Dendritic cell treated with granulocyte-macrophage colony-stimulating factor and Interleukin-4, amounts not matched to agents 40 ng/mL and 50 ng/mL, for 4 days (primary cell): ENCODE measurements at regions of chr5 and their contacts with region 1.

Region 1: GRCh38 chr5:40688127-40688761 is 8.5 kb downstream of the PTGER4 start:
- H3K4me3 Mint-ChIP-seq: peak overlapping the region; percentile 48
- H3K27ac Mint-ChIP-seq: peak overlapping the region; percentile 41
- H3K4me1 Mint-ChIP-seq: peaks cover 47% of the 10 kb centered on the region
- H3K27me3 Mint-ChIP-seq: no peaks in the 10 kb centered on the region

Region 2: GRCh38 chr5:39461026-39461682 is 1227.1 kb before region 1 on chr5:
- intact Hi-C with region 1: no loop called
- H3K4me3 Mint-ChIP-seq: no peak overlapping the region
- H3K27ac Mint-ChIP-seq: peak overlapping the region; percentile 89
- H3K4me1 Mint-ChIP-seq: peaks cover 76% of the 10 kb centered on the region
- H3K27me3 Mint-ChIP-seq: peaks cover 1% of the 10 kb centered on the region

Region 3: DNA sequence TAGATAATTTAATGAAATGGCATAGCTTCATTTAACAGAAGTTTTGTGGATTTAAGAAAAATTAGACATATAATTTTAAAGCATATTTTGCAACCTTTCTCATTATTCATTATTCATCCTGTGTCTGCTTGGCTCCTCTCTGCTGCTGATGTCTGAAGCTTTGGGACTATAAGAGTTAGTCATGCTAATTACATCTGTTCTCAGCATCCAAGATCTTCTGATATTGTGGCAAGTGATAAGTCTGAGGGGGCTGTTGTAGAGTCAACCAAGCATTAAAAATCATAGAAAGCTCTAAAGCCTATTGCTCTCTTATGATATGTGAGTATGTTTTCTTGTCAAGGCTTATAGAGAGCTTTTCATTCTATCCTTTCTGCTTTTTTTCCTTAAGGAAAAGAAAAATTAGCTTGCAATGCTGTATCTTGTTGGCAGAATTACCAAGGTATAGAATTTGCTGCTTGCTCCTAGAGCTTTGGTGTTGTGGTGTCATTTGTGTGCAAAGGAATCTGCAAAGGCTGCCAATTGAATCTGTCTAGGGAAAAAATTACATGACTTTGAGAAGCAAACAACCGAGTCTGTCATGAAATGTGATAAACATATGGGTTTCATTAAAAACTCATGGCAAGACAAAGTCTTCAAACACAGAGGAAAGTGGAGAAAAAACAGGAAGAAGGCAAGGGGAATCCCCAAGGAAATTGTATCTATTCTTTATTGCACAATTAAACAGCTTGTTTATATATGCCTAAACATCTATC is 1107.4 kb before region 1 on chr5:
- intact Hi-C with region 1: loop called (anchors 2 kb)
- H3K4me3 Mint-ChIP-seq: no peak overlapping the region
- H3K27ac Mint-ChIP-seq: no peak overlapping the region
- H3K4me1 Mint-ChIP-seq: peaks cover 25% of the 10 kb centered on the region
- H3K27me3 Mint-ChIP-seq: peaks cover 8% of the 10 kb centered on the region

Region 4: DNA sequence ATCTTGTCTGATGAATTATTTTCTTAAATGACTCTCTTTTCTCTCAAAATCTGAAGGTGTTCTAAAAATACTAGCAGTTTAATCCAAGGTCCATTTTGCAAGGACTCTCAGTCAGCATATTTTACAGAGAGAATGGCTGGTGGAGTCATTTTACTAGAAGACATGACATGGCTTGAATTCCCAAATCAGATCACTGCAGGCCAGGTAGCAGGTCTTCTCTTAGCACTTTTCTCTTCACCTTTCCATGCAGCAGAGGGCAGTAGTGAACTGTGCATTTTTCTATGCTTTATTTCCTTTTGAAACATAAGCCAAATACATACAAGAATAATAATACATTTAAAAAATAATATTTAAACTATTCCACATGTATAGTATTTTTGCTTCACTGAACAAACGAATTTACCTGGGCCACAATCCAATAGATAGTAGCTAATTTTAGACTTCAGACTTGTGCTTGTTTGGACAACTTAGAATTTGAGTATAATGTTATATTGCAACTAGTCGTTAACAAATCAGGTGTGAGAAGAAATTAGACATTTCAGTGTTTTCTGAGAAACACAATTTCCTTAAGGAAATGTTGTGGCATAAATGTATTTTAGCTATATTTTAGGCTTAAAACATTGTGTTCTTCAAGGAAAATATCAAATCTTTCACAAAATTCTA is 974.1 kb before region 1 on chr5:
- intact Hi-C with region 1: loop called (anchors 2 kb)
- H3K4me3 Mint-ChIP-seq: no peak overlapping the region
- H3K27ac Mint-ChIP-seq: no peak overlapping the region
- H3K4me1 Mint-ChIP-seq: peaks cover 4% of the 10 kb centered on the region
- H3K27me3 Mint-ChIP-seq: no peaks in the 10 kb centered on the region

Region 5: GRCh38 chr5:39948867-39949468 is 739.3 kb before region 1 on chr5:
- intact Hi-C with region 1: loop called (anchors 1 kb)
- H3K4me3 Mint-ChIP-seq: no peak overlapping the region
- H3K27ac Mint-ChIP-seq: no peak overlapping the region
- H3K4me1 Mint-ChIP-seq: peaks cover 32% of the 10 kb centered on the region
- H3K27me3 Mint-ChIP-seq: no peaks in the 10 kb centered on the region

Region 6: DNA sequence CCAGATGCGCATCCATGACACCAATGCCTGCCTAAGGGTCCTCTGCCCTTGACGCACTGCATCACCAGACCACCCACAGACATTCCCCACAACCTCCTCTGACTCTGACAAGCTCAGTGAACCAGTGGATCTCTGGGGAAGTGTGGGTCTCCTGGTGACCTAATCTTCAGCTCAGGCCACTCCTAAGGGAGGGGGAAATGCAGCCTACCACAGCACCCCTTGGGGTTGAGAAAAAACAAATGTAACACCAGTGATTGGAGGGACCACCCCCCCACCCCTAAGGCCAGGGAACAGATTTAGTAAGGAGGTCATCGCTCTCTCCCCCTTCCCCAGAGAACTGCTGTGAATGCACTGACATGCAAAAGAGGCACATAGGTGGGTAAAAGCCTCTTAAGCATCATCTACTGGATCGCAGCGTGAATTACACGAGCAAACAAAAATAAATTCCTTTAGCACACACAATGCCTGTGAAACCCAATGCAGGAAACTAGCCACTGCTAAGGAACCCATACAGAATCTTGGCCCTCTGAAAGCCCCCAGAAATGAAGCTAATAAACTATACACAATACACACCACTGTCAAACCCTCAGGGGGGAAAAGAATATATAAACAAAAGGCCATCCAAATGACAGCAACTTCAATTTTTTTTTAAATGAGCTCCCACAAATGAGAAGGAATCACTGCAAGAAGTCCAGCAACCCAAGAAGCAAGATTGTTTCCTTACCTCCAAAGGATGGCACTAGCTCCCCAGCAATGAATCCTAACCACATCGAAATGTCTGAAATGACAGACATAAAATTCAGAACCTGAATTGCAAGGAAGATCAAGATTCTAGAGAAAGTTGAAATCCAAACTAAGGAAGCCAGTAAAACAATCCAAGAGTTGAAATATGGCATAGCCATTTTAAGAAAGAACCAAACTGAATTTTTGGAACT is 522.2 kb before region 1 on chr5:
- intact Hi-C with region 1: loop called (anchors 1 kb)
- H3K4me3 Mint-ChIP-seq: no peak overlapping the region
- H3K27ac Mint-ChIP-seq: no peak overlapping the region
- H3K4me1 Mint-ChIP-seq: no peaks in the 10 kb centered on the region
- H3K27me3 Mint-ChIP-seq: no peaks in the 10 kb centered on the region

Region 7: GRCh38 chr5:40502736-40503135 is 185.5 kb before region 1 on chr5:
- intact Hi-C with region 1: loop called (anchors 5 kb)
- H3K4me3 Mint-ChIP-seq: no peak overlapping the region
- H3K27ac Mint-ChIP-seq: no peak overlapping the region
- H3K4me1 Mint-ChIP-seq: no peaks in the 10 kb centered on the region
- H3K27me3 Mint-ChIP-seq: no peaks in the 10 kb centered on the region

Region 8: GRCh38 chr5:40587284-40587882 is 100.9 kb before region 1 on chr5:
- intact Hi-C with region 1: no loop called
- H3K4me3 Mint-ChIP-seq: no peak overlapping the region
- H3K27ac Mint-ChIP-seq: no peak overlapping the region
- H3K4me1 Mint-ChIP-seq: peaks cover 18% of the 10 kb centered on the region
- H3K27me3 Mint-ChIP-seq: no peaks in the 10 kb centered on the region

Region 9: DNA sequence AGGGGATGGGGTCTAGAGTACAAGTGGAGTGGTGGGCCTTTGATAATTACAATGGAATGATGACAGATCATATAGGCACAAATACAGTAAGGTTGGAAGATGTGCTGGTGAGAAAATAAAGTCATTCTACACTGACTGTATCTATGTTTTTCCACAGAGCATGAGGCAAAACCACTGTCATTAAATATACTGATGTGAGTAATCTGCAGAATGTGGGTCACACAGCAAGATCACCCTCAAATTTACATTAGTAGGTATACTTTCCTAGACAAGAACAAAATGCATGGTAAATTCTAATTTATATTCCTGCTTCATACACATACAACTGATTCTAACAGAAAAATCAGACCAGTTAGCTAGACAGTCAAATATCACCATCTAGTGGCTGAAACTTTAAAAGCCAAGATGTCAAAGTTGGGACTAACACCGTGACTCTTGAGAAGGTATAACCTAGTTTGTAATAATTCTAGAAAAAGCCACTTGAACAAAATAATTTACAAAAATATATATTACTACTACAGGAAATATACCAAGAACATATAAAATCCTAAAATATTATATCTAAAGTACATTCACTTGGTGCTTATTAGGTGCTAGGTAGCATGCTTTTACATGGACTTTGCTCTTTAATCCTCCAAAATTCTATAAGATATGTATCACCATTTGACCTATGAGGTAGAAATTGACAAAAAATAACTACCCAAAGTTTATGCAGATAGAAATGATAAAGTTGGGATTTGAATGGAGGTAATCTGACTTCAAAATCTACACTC is 48.0 kb after region 1 on chr5:
- intact Hi-C with region 1: loop called (anchors 2 kb)
- H3K4me3 Mint-ChIP-seq: no peak overlapping the region
- H3K27ac Mint-ChIP-seq: no peak overlapping the region
- H3K4me1 Mint-ChIP-seq: peaks cover 20% of the 10 kb centered on the region
- H3K27me3 Mint-ChIP-seq: no peaks in the 10 kb centered on the region

Region 10: DNA sequence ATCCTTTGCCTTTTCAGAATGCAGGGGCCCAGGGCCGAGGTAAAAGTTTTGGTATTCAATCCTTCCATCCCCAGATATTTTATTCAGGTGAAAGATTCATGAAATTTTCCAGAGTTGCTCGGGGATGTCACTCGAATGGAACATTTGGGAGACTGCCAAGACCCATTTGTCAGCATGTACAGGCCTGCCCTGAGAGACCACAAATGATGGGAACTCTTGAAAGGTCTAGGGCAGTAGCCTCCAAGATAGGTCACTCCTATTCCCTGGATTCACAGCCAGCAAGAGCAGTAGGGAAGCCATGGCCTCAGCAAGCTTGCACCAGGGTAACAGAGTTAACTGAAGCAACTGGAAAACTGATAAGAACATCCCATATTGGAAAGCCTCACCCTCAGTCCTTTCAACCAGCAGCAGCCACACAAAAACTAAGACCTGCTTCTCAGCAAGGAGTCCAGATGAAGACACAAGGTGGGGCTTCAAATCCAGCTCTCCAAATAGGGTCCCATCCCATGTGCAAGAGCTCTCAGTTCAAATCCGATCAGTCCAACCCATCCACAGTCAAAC is 165.5 kb after region 1 on chr5:
- intact Hi-C with region 1: no loop called
- H3K4me3 Mint-ChIP-seq: no peak overlapping the region
- H3K27ac Mint-ChIP-seq: no peak overlapping the region
- H3K4me1 Mint-ChIP-seq: peaks cover 11% of the 10 kb centered on the region
- H3K27me3 Mint-ChIP-seq: no peaks in the 10 kb centered on the region